Uterus (tissue), 4 donors: ENCODE measurements at regions of chr10 and their contacts with region 1.

Region 1: DNA sequence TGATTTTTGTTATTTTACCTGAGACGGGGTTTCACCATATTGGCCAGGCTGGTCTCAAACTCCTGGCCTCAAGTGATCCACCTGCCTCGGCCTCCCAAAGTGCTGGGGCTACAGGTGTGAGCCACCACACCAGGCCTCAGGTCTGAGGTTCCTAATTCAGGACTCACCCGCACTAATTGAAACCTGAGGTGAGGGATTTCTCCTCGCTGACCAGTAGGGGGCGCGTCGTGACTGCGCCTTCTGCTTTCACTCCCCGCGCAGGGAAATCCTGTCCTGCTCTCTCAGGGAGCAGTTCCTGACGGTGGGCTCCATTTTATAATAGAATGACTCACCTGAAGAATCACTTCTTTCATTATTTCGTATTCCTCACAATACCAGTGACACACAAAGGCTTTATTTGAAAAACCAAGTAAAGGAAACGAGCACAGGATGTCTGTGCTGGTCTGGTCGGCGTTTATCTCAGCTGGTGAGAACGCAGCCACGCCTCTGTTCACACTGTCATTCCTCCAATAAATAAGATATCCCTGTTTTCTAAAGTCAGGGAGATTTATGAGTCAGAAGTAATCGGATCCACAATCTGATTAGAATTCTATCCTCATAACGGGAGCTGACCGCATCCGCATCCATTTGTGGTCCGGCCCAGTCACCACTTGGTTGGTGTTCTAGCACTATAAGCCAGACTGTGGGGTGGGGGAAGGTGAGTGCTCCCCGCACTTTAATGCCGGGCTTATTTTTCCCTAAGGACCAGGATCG is 35.4 kb downstream of the BAG3 start:
- DNase-seq: peak; percentile 80
- H3K4me3 ChIP-seq: no peak overlapping the region
- H3K27ac ChIP-seq: peak overlapping the region; percentile 53 to 65
- H3K4me1 ChIP-seq: no peaks in the 10 kb centered on the region
- H3K27me3 ChIP-seq: no peaks in the 10 kb centered on the region
- CTCF ChIP-seq: peak; percentile 85 to 92 (median 90)
- POLR2A ChIP-seq: no peak

Region 2: GRCh38 chr10:119189811-119190282 is 496.8 kb before region 1 on chr10:
- intact Hi-C with region 1: no loop called
- DNase-seq: no peak
- H3K4me3 ChIP-seq: no peak overlapping the region
- H3K27ac ChIP-seq: no peak overlapping the region
- H3K4me1 ChIP-seq: no peaks in the 10 kb centered on the region
- H3K27me3 ChIP-seq: no peaks in the 10 kb centered on the region
- CTCF ChIP-seq: no peak
- POLR2A ChIP-seq: no peak

Region 3: GRCh38 chr10:119750391-119751230 is 64.0 kb after region 1 on chr10:
- intact Hi-C with region 1: loop called (anchors 5 kb)
- DNase-seq: peak; percentile 77 to 81
- H3K4me3 ChIP-seq: no peak overlapping the region
- H3K27ac ChIP-seq: peak overlapping the region in 1 of 2 donors; percentile 2
- H3K4me1 ChIP-seq: peaks cover 0 to 4% of the 10 kb centered on the region in 2 donors
- H3K27me3 ChIP-seq: no peaks in the 10 kb centered on the region
- CTCF ChIP-seq: peak; percentile 84 to 95 (median 91)
- POLR2A ChIP-seq: no peak

Region 4: GRCh38 chr10:119807960-119808697 is 121.5 kb after region 1 on chr10:
- intact Hi-C with region 1: no loop called
- DNase-seq: no peak
- H3K4me3 ChIP-seq: no peak overlapping the region
- H3K27ac ChIP-seq: no peak overlapping the region
- H3K4me1 ChIP-seq: no peaks in the 10 kb centered on the region
- H3K27me3 ChIP-seq: no peaks in the 10 kb centered on the region
- CTCF ChIP-seq: no peak
- POLR2A ChIP-seq: no peak